ENCODE measurements at regions of chr3 and their contacts with region 1.

Region 1: DNA sequence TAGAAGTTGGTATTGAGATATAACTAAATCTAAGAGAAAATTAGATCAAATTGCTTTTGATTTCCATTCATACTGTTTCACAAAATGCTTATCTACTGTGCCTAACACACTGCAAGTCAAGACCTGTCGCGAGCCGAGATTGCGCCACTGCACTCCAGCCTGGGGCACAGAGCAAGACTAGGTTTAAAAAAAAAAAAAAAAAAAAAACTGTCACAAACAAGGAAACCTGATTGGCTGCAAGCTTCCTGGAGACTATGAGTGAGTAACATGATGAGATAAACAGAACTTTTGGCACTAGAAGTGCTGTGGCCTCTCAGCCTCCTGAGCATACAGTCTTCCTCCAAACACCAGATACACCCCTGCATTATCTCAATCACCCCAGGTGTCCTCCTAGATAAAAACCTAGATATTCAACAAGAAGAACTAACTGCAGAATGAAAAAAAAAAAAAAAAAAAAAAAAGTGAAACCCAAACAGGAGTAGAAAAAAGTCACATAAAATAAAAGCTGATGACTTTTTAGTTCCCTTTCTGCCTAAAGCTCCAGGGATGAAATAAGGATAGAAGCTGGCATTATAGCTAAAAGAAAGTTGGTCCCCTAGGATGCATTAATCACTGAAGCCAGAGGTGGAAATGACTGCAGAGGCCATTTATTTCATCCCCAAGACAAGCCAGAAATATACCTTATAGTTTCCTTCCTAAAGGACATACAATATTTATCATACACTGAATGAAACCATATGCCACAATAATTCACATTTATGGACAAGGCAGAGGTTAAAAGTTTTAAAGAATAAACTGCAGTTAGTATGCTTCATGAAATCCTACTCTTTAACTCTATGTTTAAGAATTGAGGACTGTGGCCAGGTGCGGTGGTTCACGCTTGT is 82.4 kb downstream of the P3H2 start:
- DNase-seq: no peak
- H3K4me3 ChIP-seq: no peak overlapping the region
- CTCF ChIP-seq: no peak

Region 2: GRCh38 chr3:189824629-189825312 is 213.5 kb before region 1 on chr3:
- in situ Hi-C with region 1: no loop called
- DNase-seq: peak; percentile 73
- H3K4me3 ChIP-seq: no peak overlapping the region
- CTCF ChIP-seq: no peak

Region 3: DNA sequence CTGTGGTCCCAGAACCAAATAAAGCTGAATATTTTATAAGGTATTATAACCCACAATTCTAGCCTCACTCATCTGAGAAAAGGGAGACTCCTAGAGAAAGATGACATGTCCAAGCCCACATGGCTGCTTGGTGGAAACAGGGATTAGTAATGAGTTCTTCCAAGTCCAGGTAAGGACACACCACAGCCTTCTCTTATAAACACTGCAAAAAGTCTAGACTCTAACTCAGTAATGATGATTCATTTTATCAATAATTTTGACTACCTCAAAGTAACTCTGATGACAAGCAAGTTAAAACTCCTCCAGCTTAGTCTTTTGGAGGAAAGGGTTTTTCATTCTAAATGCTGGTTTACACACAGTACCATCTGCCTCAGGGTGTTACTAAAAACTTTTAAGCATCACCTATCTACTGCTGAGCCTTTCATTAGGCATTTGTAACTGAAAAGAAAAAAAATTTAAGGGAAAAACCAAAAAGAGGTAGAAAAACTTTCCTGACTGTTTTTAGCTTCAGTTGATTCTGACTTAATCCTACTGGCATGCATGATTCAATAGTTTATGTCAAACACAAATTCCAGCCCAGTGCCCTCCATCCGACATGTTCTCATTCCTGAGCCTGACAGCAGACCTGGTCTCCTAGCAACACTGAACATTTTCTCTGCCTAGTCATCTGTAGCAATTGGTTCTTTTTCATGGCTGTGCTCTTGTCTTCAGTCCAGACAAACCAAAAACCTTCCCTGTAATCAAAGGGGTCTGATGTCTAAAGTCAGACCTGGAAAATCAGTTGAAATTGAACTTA is 38.5 kb after region 1 on chr3:
- in situ Hi-C with region 1: no loop called
- DNase-seq: peak; percentile 96
- H3K4me3 ChIP-seq: no peak overlapping the region
- CTCF ChIP-seq: no peak

Region 4: DNA sequence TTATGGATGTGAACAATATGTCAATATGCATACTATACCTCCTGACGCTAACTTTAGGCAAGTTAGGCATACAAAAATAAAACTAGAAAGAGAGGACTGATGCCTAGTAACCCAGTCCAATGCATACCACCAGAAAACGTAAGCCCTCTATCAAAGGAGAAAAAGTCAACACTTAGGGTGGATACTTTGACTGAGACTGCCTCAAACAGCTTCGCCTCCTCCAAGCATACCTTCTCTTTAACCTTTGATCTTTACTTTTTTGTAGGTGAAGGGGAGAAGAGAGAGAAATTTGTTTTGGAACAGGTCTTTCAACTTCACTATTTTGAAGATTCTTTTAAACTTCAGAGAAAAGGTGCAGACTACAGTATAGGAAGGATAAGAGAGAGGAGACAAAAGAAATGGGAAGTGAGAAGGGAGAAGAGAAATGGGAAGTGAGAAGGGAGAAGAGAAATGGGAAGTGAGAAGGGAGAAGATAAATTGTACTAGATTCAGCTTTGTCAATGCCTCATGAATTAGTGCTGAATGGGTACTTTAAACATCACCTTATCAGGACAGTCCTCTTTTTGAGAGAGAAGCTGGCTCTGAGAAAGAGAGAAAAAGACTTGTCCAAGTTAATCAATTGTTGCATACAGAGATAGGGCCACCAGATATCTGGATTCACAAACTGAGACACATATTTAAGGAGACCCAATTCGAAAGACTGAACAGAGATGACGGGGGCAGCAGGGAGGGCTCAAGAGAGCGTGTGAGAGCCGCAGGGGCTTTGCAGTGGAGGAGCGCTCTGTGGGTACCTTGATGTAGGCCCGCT is 81.4 kb after region 1 on chr3:
- in situ Hi-C with region 1: loop called (anchors 5 kb)
- DNase-seq: no peak
- H3K4me3 ChIP-seq: peak overlapping the region; percentile 74
- CTCF ChIP-seq: no peak

Measured in astrocyte of the cerebellum (primary cell).